Endothelial cell of umbilical vein (primary cell): ENCODE measurements at regions of chr11 and their contacts with region 1.

Region 1: GRCh38 chr11:47552566-47553416 is at the start of gene CELF1:
- DNase-seq: peak; percentile 90
- H3K4me3 ChIP-seq: peak within 1 kb of the TSS; percentile 69 to 75 (median 74)
- H3K27ac ChIP-seq: peak within 1 kb of the TSS; percentile 33
- H3K4me1 ChIP-seq: peaks cover 9% of the 10 kb centered on the region
- H3K27me3 ChIP-seq: no peaks in the 10 kb centered on the region
- CTCF ChIP-seq: peak; percentile 84 to 95
- POLR2A ChIP-seq: peak; percentile 87
- total RNA-seq, gene CELF1: 113 and 120 TPM in 2 replicates

Region 2: GRCh38 chr11:47296045-47296444 is 256.7 kb before region 1 on chr11:
- CTCF ChIA-PET with region 1: no interaction called
- POLR2A ChIA-PET with region 1: no interaction called
- dilution Hi-C with region 1: no loop called
- intact Hi-C with region 1: no loop called
- DNase-seq: no peak
- H3K4me3 ChIP-seq: no peak overlapping the region
- H3K27ac ChIP-seq: no peak overlapping the region
- H3K4me1 ChIP-seq: no peaks in the 10 kb centered on the region
- H3K27me3 ChIP-seq: no peaks in the 10 kb centered on the region
- CTCF ChIP-seq: no peak
- POLR2A ChIP-seq: no peak

Region 3: GRCh38 chr11:47426061-47426956 is 126.5 kb before region 1 on chr11 and contains the start of gene PSMC3:
- CTCF ChIA-PET with region 1: no interaction called
- POLR2A ChIA-PET with region 1: no interaction called
- dilution Hi-C with region 1: no loop called
- intact Hi-C with region 1: loop called (anchors 1 kb)
- DNase-seq: peak; percentile 97
- H3K4me3 ChIP-seq: peak within 1 kb of the TSS; percentile 68 to 89 (median 79)
- H3K27ac ChIP-seq: peak within 1 kb of the TSS; percentile 90
- H3K4me1 ChIP-seq: peaks cover 10% of the 10 kb centered on the region
- H3K27me3 ChIP-seq: no peaks in the 10 kb centered on the region
- CTCF ChIP-seq: no peak
- POLR2A ChIP-seq: peak; percentile 80
- total RNA-seq, gene PSMC3: 202 and 203 TPM in 2 replicates

Region 4: DNA sequence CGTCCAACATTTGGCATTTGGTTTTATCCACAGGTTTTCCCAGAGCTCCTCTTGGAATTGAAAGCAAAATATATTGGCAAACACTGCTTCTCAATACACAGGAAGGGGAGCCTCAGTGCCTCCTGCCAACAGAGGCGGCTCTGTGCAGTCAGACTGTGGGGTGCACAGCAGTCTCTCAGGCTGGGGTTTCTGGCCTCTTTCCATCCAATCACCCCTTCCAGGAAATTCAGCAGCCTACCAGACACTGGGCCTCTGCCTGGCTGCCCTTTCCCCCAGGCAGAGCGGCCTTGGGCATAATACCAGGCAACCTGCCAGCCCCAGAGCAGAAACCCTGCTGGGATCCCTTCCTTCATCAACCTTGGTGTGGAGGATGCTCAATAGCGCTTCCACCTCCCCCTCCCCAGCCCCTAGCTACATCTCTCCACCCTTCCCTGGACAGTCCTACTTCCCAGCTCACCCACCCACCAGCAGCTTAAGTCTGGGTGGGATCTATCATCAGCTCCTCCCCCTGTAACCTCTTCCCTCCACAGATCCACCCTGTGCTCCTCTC is 86.0 kb before region 1 on chr11:
- CTCF ChIA-PET with region 1: interaction called, 6 read pairs
- POLR2A ChIA-PET with region 1: interaction called, 6 read pairs
- dilution Hi-C with region 1: no loop called
- intact Hi-C with region 1: loop called (anchors 1 kb)
- DNase-seq: peak; percentile 80
- H3K4me3 ChIP-seq: peak overlapping the region in 1 of 3 experiments; percentile 10
- H3K27ac ChIP-seq: peak overlapping the region; percentile 36
- H3K4me1 ChIP-seq: peaks cover 37% of the 10 kb centered on the region
- H3K27me3 ChIP-seq: no peaks in the 10 kb centered on the region
- CTCF ChIP-seq: no peak
- POLR2A ChIP-seq: no peak

Region 5: DNA sequence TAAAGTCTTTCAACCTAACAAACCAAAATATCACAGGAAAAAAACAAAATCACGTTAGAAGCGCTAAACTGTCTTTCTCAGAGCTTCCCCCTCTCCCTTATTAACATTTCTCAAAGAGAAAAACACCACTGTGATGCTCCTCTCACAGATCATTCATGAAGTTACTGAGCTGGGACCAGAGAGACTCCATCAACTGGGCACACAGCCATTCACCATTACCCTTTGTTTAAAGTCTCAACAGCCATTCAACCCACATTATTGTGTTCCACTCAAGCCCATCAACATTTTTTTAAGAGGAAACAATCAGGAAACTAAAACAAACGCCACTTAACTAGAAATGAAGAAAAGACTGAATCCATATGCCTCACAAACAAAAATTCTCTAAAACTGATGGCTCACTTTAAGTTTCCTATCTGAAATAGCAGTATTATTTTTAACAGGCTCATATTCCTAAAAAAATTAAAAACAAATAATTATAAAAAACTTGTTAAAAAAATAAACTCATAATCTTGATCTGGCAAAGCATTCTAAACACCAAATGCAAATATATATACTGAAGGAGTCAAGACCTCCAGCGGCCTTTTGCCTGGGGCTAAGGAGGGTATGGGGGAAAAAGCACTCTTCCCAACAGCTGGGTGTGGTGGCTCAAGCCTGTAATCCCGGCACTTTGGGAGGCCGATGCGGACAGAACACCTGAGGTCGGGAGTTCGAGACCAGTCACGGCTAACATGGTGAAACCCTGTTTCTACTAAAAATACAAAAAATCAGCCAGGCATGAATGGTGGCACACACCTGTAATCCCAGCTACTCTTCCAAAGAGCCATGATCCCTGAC is 13.8 kb before region 1 on chr11:
- CTCF ChIA-PET with region 1: interaction called, 41 read pairs
- POLR2A ChIA-PET with region 1: interaction called, 5 read pairs
- dilution Hi-C with region 1: no loop called
- intact Hi-C with region 1: loop called (anchors 2 kb)
- DNase-seq: peak; percentile 81
- H3K4me3 ChIP-seq: no peak overlapping the region
- H3K27ac ChIP-seq: peak overlapping the region; percentile 58
- H3K4me1 ChIP-seq: peaks cover 27% of the 10 kb centered on the region
- H3K27me3 ChIP-seq: no peaks in the 10 kb centered on the region
- CTCF ChIP-seq: no peak
- POLR2A ChIP-seq: no peak

Region 6: DNA sequence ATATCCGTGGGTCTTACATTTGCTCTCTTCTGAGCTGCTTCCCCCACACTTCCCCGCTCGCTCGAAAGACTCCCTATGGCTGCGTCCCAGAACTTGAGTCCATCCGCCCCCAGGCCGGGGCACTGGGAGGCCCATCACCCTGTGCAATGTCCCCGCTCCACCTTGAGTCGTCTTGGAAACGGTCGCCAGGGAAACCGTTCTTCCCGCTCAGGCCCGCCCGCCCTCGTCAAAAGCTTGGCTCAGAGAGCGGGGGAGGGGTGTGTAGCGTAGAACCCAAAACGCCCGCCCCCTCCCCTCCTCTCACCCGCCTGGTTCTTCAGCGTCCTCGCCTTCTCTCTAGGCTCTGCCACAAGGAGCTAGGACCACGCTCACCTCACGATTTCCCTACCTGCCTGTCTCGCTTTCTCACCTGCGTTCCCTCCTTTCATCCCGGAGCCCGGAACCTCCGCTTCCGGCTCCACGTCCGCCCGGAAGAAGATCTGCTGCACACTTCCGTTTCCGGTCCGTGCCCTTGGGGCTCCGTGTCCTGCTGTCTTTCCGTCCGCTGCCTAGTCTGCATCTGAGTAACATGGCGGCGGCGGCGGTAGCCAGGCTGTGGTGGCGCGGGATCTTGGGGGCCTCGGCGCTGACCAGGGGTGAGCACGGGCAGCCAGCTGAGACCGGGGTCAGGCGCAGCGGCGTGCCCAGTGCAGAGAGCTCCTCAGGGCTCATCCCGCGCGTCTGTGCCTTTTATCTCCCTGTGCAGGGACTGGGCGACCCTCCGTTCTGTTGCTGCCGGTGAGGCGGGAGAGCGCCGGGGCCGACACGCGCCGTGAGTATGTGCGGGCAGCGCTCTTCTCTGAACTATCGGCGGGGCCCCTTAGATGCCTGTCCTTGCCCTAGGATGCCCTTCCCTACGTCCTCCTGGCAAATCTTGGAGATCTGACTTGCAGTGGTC is 26.0 kb after region 1 on chr11 and contains the starts of genes KBTBD4 and NDUFS3:
- CTCF ChIA-PET with region 1: no interaction called
- POLR2A ChIA-PET with region 1: no interaction called
- dilution Hi-C with region 1: no loop called
- intact Hi-C with region 1: loop called (anchors 1 kb)
- DNase-seq: peak; percentile 84
- H3K4me3 ChIP-seq: peak within 1 kb of the TSS; percentile 64 to 77 (median 73)
- H3K27ac ChIP-seq: peak within 1 kb of the TSS; percentile 47
- H3K4me1 ChIP-seq: peaks cover 23% of the 10 kb centered on the region
- H3K27me3 ChIP-seq: no peaks in the 10 kb centered on the region
- CTCF ChIP-seq: no peak
- POLR2A ChIP-seq: peak; percentile 63
- total RNA-seq, gene KBTBD4: 16.3 and 16.6 TPM in 2 replicates
- total RNA-seq, gene NDUFS3: 91.8 and 99.7 TPM in 2 replicates